ENCODE measurements at regions of chr13 and their contacts with region 1.

Region 1: GRCh38 chr13:49840266-49840665 is 47.8 kb upstream of the KPNA3 start:
- DNase-seq: no peak
- H3K4me3 ChIP-seq: no peak overlapping the region
- H3K27ac ChIP-seq: no peak overlapping the region
- H3K4me1 ChIP-seq: no peaks in the 10 kb centered on the region
- H3K27me3 ChIP-seq: no peaks in the 10 kb centered on the region
- CTCF ChIP-seq: no peak

Region 2: GRCh38 chr13:49669735-49670309 is 170.4 kb before region 1 on chr13:
- intact Hi-C with region 1: loop called (anchors 10 kb)
- DNase-seq: peak in 4 of 5 donors; percentile 68 to 88 (median 77)
- H3K4me3 ChIP-seq: peak overlapping the region in 1 of 3 donors; percentile 18
- H3K27ac ChIP-seq: no peak overlapping the region
- H3K4me1 ChIP-seq: no peaks in the 10 kb centered on the region
- H3K27me3 ChIP-seq: no peaks in the 10 kb centered on the region
- CTCF ChIP-seq: peak; percentile 85

Region 3: DNA sequence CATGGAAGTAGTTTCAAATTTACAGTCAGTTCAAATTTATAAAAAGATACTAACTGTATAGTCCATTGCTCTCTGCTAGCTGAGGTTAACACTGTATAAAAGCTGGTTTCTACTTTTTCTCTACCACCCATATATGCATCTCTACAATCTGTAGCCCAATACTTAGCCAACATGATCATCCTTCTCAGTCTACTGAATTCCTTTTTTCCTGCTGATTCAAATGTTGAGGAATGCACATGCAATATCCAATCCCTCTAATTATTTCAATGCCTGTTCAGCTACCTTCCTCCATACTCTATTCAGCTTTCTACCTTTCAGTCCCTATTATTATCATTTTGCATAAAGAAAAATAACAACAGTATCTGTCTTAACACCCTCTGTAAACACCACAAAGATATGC is 63.4 kb before region 1 on chr13:
- intact Hi-C with region 1: no loop called
- DNase-seq: no peak
- H3K4me3 ChIP-seq: no peak overlapping the region
- H3K27ac ChIP-seq: no peak overlapping the region
- H3K4me1 ChIP-seq: peaks cover 0 to 8% (median 6%) of the 10 kb centered on the region in 3 donors
- H3K27me3 ChIP-seq: no peaks in the 10 kb centered on the region
- CTCF ChIP-seq: no peak

Measured in kidney (tissue), 22 donors.